ENCODE measurements at regions of chr4 and their contacts with region 1.

Region 1: DNA sequence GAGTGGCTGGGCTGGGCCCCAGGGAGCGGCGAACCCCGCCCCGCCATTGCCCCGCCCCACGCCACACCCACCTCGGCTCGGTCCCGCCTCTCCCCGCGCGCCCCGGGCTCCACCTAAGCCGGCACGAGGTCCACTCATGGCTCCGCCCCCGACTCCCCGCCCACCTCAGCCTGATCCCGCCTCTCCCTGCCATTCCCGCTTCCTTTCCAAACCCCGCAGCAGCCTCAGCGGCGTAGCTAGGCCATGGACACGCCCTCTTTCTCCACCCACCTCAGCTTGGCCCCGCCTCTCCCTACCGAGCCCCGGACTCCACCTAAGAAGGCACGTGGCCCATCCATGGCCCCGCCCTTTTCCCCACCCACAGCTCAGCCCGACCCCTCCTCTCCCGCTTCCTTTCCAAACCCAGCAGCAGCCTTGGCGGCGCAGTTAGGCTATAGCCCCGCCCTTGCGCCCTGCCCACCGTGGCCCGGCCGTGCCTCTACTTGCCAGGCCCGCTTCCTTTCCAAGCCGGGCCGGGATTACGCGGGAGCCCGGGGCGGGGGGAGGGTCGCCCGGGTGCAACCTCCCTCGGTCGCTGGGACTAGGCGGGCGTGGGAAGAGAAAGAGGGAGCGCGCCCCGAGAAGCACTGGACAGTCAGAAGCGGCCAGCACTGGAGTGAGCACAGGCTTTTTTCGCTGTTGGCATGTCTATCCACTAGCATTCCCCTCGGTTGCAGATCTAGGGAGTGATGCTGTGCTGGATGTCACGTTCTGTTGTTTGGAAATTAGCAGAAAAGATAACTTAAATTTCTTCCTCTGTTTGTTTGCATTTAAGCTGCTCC is at the start of gene RELL1:
- DNase-seq: peak; percentile 99 to 100 (median 100)
- ATAC-seq: peak; percentile 97 to 98 (median 98)
- H3K4me3 ChIP-seq: peak within 1 kb of the TSS; percentile 65 to 99 (median 92)
- H3K27ac ChIP-seq: peak within 1 kb of the TSS; percentile 75 to 98 (median 96)
- H3K4me1 ChIP-seq: peaks cover 0 to 46% (median 24%) of the 10 kb centered on the region in 12 donors
- H3K27me3 ChIP-seq: no peaks in the 10 kb centered on the region
- CTCF ChIP-seq: no peak
- POLR2A ChIP-seq: peak in 1 of 2 donors; percentile 12
- total RNA-seq, gene RELL1: 17.1 to 40.2 (median 28.5) TPM

Region 2: DNA sequence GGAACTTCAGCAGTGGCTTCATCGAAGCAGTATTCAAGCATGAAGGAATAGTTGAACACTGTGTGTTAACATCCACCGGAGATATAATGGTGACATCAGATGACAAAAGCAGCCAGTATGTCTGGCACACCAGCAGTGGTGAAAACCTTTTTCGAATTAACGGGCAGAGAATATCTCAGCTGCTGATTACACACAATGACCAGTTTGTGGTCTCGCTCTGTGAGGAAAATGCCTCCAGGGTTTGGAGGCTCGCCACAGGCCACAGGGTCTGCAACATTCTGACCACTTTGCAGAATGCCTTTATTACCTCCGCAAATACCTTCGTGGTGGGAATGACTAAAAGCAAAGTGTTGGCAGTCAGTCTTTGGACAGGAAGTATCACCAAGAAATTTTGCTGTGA is 240.6 kb before region 1 on chr4:
- intact Hi-C with region 1: no loop called
- DNase-seq: no peak
- ATAC-seq: no peak
- H3K4me3 ChIP-seq: no peak overlapping the region
- H3K27ac ChIP-seq: no peak overlapping the region
- H3K4me1 ChIP-seq: no peaks in the 10 kb centered on the region
- H3K27me3 ChIP-seq: peaks cover 0 to 42% (median 5%) of the 10 kb centered on the region in 9 donors
- CTCF ChIP-seq: no peak
- POLR2A ChIP-seq: no peak

Region 3: DNA sequence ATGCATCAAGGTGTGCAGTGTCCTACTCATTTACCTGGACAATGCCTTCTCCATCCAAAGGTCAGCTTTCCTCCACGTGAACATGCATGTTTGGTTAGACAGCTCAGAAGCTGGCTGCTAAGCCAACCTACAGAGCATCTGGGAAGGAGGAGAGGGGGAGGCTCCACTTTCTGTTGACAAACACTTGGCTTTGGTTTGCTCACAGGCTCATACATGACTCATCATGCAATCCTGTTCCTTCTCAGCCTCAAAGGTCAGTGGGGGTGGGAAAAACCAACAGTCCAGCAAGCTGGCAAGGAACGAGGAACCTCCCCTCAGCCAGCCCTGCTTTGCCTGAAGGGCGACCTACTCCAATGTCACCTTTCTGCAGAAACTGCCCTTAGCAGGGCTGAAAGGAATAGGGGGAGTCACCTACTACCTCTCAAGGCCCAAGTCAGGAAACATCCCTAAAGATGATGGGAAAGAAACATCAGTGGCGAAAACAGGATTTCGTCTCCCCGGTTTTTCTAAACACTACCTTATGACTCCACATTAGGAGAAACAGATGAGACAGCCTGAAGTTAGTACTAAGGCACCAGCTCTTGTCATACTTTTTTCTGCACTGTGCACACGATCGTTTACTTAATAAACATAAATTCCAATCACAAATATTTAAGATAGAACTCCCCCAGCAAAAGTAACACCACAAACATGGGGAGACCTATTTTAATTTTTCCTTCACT is 38.3 kb before region 1 on chr4:
- intact Hi-C with region 1: loop called in 2 of 10 experiments (anchors 5 kb)
- DNase-seq: peak in 4 of 5 donors; percentile 48 to 90 (median 72)
- ATAC-seq: peak; percentile 91 to 98 (median 95)
- H3K4me3 ChIP-seq: no peak overlapping the region
- H3K27ac ChIP-seq: peak overlapping the region in 9 of 12 donors; percentile 31 to 74 (median 58)
- H3K4me1 ChIP-seq: peaks cover 0 to 27% (median 11%) of the 10 kb centered on the region in 12 donors
- H3K27me3 ChIP-seq: no peaks in the 10 kb centered on the region
- CTCF ChIP-seq: no peak
- POLR2A ChIP-seq: no peak

Region 4: GRCh38 chr4:37666625-37667071 is 19.9 kb before region 1 on chr4:
- intact Hi-C with region 1: loop called in 3 of 10 experiments (anchors 2 kb)
- DNase-seq: peak in 3 of 5 donors; percentile 43 to 73 (median 51)
- ATAC-seq: peak; percentile 39 to 76 (median 70)
- H3K4me3 ChIP-seq: no peak overlapping the region
- H3K27ac ChIP-seq: peak overlapping the region; percentile 50 to 83 (median 68)
- H3K4me1 ChIP-seq: peaks cover 27 to 77% (median 63%) of the 10 kb centered on the region in 12 donors
- H3K27me3 ChIP-seq: no peaks in the 10 kb centered on the region
- CTCF ChIP-seq: peak in 3 of 12 donors; percentile 7 to 15 (median 15)
- POLR2A ChIP-seq: no peak

Region 5: DNA sequence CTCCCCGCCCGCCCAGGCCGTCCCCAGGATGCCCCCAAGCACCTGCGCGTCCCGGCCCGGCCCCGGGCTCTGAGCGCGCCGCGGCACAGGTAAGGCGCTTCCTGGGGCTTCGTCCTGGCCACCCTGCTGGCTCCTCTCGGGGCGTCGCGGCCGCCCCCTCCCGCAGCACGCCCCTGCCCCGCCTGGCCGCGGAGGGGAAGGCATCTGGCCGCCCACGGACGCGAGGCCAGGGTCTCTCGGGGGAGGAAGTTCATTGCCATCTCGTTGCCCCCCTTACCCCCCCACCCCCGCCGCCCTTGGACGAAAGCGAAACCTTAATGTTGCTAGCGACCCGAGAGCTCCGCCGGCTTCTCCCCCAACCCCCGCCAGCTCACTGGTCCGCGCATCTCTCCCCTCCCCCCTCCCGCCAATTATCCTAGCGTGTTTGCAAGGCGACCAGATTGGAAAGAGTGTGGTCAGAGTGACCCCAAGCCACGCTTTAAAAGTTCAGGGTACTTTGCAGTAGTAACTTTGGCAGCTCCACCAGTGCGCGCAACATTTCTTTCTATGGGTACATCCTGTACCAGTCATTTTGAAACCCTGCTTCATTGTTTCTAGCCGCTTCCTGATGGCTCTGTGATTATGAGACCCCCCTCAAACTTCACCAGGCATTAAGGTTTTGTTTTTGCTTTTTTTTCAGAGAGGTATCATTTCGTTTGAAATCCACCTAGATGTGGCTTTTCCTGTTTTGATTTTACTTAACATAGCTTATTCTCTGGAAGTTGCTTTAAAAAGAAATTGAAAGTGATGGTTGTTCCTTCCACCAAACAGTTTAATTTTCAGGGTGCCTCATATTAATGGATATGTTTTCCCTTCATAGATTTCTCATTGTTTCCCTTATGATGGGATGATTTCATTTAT is 204.9 kb after region 1 on chr4:
- intact Hi-C with region 1: loop called in 1 of 10 experiments (anchors 10 kb)
- DNase-seq: peak in 4 of 5 donors; percentile 47 to 69 (median 54)
- ATAC-seq: peak; percentile 10 to 52 (median 28)
- H3K4me3 ChIP-seq: peak overlapping the region; percentile 79 to 99 (median 93)
- H3K27ac ChIP-seq: peak overlapping the region; percentile 88 to 96 (median 94)
- H3K4me1 ChIP-seq: peaks cover 0 to 43% (median 10%) of the 10 kb centered on the region in 12 donors
- H3K27me3 ChIP-seq: no peaks in the 10 kb centered on the region
- CTCF ChIP-seq: peak in 3 of 12 donors; percentile 9 to 29 (median 23)
- POLR2A ChIP-seq: no peak

Region 6: GRCh38 chr4:38034986-38035882 is 348.7 kb after region 1 on chr4:
- intact Hi-C with region 1: loop called in 1 of 10 experiments (anchors 10 kb)
- DNase-seq: peak in 1 of 5 donors; percentile 36
- ATAC-seq: peak in 3 of 4 donors; percentile 60 to 65 (median 65)
- H3K4me3 ChIP-seq: no peak overlapping the region
- H3K27ac ChIP-seq: peak overlapping the region in 1 of 12 donors; percentile 56
- H3K4me1 ChIP-seq: peaks cover 0 to 12% (median 1%) of the 10 kb centered on the region in 12 donors
- H3K27me3 ChIP-seq: no peaks in the 10 kb centered on the region
- CTCF ChIP-seq: peak; percentile 48 to 83 (median 70)
- POLR2A ChIP-seq: no peak

Region 7: GRCh38 chr4:38290366-38290765 is 603.8 kb after region 1 on chr4:
- intact Hi-C with region 1: no loop called
- DNase-seq: no peak
- ATAC-seq: no peak
- H3K4me3 ChIP-seq: no peak overlapping the region
- H3K27ac ChIP-seq: no peak overlapping the region
- H3K4me1 ChIP-seq: no peaks in the 10 kb centered on the region
- H3K27me3 ChIP-seq: no peaks in the 10 kb centered on the region
- CTCF ChIP-seq: no peak
- POLR2A ChIP-seq: no peak

Measured in heart left ventricle (tissue), 16 donors.